ENCODE measurements at regions of chr16 and their contacts with region 1.

Region 1: DNA sequence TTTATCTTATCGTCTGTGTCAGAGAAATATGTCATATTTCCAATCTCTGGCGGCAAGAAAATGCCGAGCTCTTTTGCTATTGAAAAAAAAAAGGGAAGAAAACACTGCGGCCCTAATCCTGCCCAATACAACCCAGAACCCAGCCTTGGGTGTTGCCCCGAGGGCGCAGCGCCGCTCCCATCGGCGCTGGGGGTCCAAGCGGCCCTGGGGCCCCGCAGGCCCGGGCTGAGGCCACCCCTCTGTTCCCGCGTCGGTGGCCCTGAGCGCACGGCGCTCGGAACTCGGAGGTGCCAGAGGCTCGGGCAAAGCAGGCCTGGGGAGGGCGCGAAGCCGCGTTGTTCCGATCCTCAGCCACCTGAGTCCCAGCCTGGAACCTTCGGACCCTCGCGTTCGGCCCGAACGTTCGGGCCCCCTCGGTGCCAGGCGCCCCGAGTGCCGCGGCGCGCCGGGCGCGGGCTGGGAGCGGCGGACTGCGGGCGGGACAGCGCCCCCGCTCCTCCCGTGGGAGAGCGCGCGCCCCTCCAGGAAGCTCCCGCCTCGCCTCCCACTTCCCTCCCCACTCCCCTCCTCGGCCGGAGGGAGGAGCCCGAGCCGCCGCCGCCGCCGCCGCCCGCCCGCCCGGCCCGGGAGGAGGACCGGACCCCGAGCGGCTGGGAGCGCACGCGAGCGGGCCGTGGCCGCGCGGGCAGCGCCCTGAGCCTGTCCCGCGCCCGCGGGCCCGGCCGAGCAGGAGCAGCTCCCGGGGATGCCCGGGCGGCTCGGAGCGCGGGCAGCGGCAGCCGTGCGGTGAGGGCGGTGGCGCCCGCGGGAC is at the start of gene CPNE2:
- DNase-seq: no peak
- H3K4me3 ChIP-seq: peak within 1 kb of the TSS; percentile 70
- CTCF ChIP-seq: peak; percentile 27

Region 2: GRCh38 chr16:57061084-57061905 is 30.9 kb before region 1 on chr16:
- CTCF ChIA-PET with region 1: interaction called, 15 read pairs
- POLR2A ChIA-PET with region 1: no interaction called
- DNase-seq: no peak
- H3K4me3 ChIP-seq: no peak overlapping the region
- CTCF ChIP-seq: no peak

Region 3: GRCh38 chr16:57106767-57107166 is 14.6 kb after region 1 on chr16:
- CTCF ChIA-PET with region 1: interaction called, 183 read pairs
- POLR2A ChIA-PET with region 1: no interaction called
- DNase-seq: no peak
- H3K4me3 ChIP-seq: no peak overlapping the region
- CTCF ChIP-seq: no peak

Region 4: GRCh38 chr16:57141822-57142631 is 49.8 kb after region 1 on chr16:
- CTCF ChIA-PET with region 1: interaction called, 11 read pairs
- POLR2A ChIA-PET with region 1: no interaction called
- DNase-seq: no peak
- H3K4me3 ChIP-seq: no peak overlapping the region
- CTCF ChIP-seq: no peak

Region 5: DNA sequence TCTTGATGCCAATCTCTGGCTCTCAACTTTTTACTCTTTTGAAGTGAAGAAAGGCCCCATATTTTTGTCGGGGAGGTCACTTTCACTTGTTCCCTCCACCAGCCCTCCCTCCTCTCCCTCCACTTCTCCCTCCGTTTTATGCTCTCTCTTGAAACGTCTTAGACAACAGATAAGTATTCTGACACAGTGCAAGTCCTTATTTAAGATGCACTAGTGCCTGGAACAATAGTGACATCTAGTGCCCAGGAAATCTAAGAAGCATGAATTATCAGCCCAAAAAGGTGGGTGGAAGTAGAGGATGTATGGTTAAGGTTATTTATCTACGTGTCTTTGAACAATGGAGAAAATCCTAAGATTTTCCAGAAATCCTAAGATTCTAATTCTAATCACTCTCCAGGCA is 75.8 kb after region 1 on chr16:
- CTCF ChIA-PET with region 1: interaction called, 197 read pairs
- POLR2A ChIA-PET with region 1: no interaction called
- DNase-seq: peak; percentile 40
- H3K4me3 ChIP-seq: no peak overlapping the region
- CTCF ChIP-seq: peak; percentile 60

Region 6: DNA sequence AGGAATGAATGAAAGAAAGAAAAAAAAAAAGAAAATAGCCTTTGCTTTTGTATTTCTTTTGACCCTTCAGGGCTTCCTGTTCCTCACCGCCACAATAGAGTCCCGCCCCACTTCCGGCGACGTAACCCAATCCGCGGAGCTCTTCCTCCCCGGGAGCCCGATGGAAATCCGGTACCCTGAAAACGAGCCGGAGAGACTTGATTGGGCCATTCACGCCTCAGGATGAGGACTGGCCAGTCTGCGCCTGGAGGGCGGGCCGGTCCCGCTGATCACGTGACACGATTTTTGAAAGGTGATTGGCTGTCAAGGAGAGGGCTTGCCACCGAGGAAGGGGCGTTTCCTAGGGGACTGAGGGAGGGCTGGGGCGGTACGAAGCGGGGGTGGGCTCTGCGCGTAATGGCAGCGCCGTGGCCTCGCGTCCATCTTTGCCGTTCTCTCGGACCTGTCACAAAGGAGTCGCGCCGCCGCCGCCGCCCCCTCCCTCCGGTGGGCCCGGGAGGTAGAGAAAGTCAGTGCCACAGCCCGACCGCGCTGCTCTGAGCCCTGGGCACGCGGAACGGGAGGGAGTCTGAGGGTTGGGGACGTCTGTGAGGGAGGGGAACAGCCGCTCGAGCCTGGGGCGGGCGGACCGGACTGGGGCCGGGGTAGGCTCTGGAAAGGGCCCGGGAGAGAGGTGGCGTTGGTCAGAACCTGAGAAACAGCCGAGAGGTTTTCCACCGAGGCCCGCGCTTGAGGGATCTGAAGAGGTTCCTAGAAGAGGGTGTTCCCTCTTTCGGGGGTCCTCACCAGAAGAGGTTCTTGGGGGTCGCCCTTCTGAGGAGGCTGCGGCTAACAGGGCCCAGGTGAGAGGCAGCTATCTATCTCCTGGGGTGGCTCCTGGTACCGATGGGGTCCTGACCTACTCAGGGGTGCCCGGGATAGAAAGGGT is 94.0 kb after region 1 on chr16 and contains the starts of genes PSME3IP1 and RSPRY1:
- CTCF ChIA-PET with region 1: interaction called, 21 read pairs
- POLR2A ChIA-PET with region 1: no interaction called
- DNase-seq: peak; percentile 96
- H3K4me3 ChIP-seq: peak within 1 kb of the TSS; percentile 98
- CTCF ChIP-seq: no peak